OCI-LY7 (cell line): ENCODE measurements at regions of chr12 and their contacts with region 1.

Region 1: DNA sequence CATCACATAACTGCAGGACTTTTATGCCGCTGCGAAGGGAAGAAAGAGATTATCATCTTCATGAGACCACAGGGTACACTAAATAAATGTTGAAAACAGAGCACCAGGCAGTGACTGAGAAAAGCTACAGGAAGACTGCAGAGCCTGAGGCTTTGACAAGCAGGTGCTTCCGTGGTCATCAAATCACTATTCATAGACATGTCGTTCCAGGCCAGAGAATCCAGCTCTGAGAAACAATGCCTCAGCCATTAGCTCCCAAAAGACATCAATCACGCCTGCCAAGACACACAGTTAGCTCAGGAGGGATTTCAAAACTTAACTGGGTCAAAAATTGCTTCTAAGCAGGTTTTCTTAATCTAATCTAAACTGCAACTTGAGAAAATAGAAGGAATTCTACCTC is 47.2 kb upstream of the GARIN6 start:
- DNase-seq: peak; percentile 99
- H3K4me3 ChIP-seq: peak overlapping the region; percentile 41
- H3K27ac ChIP-seq: peak overlapping the region; percentile 99
- H3K4me1 ChIP-seq: peaks cover 49% of the 10 kb centered on the region
- CTCF ChIP-seq: no peak

Region 2: DNA sequence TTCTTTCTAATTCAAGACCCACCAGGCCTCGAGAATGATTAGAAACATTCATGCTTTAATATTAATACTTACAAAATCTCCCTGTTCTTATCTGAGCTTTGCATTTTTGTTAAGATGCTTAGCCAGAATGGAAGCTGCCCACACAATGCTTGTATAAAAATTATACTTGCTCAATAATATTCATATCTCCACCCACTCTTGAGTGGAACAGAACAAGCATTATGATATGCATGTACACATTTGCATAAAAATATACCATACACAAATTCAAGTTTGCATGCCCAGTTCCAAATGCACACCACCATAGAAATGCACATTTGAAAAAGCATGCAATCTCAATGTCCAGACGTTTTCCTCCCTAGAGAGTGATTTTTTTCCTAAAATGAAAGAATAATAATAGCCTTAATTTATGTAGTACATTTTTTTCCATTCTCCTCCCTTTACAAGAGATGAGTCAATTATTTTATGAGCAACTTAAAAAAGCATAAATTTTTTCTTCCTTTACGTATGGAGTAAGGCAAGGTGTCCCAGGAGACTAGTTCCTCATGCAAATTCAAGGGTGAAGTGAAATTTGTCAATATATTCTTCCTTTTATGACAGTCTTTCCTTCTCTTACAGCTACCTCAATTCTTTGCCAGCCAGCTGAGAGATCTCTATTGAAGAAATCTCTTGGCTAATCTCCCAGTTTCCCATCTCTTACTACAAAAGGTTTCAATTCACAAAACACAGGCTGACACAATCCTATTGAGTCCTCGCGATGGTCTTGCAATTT is 265.9 kb before region 1 on chr12:
- CTCF ChIA-PET with region 1: no interaction called
- POLR2A ChIA-PET with region 1: no interaction called
- intact Hi-C with region 1: loop called (anchors 1 kb)
- DNase-seq: no peak
- H3K4me3 ChIP-seq: no peak overlapping the region
- H3K27ac ChIP-seq: peak overlapping the region; percentile 53
- H3K4me1 ChIP-seq: peaks cover 30% of the 10 kb centered on the region
- CTCF ChIP-seq: no peak

Region 3: DNA sequence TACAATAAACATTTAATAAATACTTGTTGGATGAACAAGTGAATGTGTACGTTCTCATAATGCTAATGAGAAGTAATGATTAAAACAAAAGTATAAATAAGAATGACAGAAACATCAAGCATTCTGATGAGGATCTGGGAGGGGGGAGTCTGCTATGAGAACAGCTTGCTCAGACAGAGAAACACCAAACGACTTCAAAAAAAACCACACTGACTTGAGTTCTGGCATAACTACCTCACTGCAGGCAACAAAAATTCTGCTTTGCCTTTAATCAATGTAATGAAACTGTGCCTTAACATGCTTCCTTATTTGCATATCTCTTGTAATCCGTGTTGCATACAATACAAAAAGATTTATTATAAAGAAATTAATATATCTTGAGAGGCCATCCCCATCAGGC is 248.1 kb before region 1 on chr12:
- CTCF ChIA-PET with region 1: no interaction called
- POLR2A ChIA-PET with region 1: no interaction called
- intact Hi-C with region 1: no loop called
- DNase-seq: no peak
- H3K4me3 ChIP-seq: no peak overlapping the region
- H3K27ac ChIP-seq: no peak overlapping the region
- H3K4me1 ChIP-seq: no peaks in the 10 kb centered on the region
- CTCF ChIP-seq: no peak

Region 4: DNA sequence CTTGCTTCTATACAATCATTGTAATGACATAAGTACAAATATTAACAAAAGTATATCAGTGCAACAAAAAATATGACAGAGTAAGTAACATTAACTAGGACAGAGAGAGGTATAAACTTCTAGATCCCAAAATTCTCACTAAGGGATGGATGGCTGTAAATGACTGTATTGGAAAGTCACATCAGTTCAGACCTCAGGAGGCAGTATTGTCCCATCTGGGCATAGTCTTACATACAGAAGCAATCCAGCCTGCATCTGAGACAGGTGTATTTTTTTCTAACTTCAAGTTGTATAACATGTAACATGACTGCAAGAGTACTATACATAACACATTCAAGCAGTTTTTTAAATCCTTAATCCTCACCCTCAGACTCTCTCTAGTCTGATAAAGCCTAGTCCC is 146.2 kb after region 1 on chr12:
- CTCF ChIA-PET with region 1: interaction called, 3 read pairs
- POLR2A ChIA-PET with region 1: interaction called, 6 read pairs
- intact Hi-C with region 1: loop called (anchors 1 kb)
- DNase-seq: peak; percentile 59
- H3K4me3 ChIP-seq: no peak overlapping the region
- H3K27ac ChIP-seq: peak overlapping the region; percentile 97
- H3K4me1 ChIP-seq: peaks cover 57% of the 10 kb centered on the region
- CTCF ChIP-seq: peak; percentile 71